ENCODE measurements at regions of chr16 and their contacts with region 1.

Region 1: DNA sequence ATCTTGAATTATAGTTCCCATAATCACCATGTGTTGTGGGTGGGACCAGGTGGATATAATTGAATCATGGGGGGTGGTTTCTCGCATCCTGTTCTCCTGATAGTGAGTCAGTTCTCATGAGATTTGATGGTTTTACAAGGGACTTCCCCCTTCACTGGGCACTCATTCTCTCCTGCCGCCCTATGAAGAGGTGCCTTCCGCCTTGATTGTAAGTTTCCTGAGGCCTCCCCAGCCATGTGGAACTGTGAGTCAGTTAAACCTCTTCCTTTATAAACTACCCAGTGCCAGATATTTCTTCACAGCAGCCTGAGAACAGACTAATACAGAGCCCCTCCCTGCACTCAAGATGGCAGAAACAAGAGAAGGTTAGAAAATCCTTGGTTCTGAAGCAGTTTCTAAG is 26.4 kb downstream of the LDAF1 start:
- DNase-seq: peak; percentile 53
- H3K4me3 Mint-ChIP-seq: no peak overlapping the region
- H3K27ac Mint-ChIP-seq: no peak overlapping the region
- H3K4me1 Mint-ChIP-seq: peaks cover 16% of the 10 kb centered on the region
- H3K27me3 Mint-ChIP-seq: no peaks in the 10 kb centered on the region

Region 2: GRCh38 chr16:21158208-21159110 is 26.4 kb before region 1 on chr16 and contains the start of gene LDAF1:
- CTCF ChIA-PET with region 1: interaction called, 3 read pairs
- intact Hi-C with region 1: loop called (anchors 2 kb)
- DNase-seq: peak; percentile 86
- H3K4me3 Mint-ChIP-seq: peak within 1 kb of the TSS; percentile 88
- H3K27ac Mint-ChIP-seq: no peak within 1 kb of the TSS
- H3K4me1 Mint-ChIP-seq: peaks cover 26% of the 10 kb centered on the region
- H3K27me3 Mint-ChIP-seq: no peaks in the 10 kb centered on the region
- total RNA-seq, gene LDAF1: 13.3 to 14.5 TPM

Region 3: GRCh38 chr16:21277927-21278706 is 93.3 kb after region 1 on chr16 and contains the start of gene CRYM:
- CTCF ChIA-PET with region 1: interaction called, 5 read pairs
- intact Hi-C with region 1: loop called (anchors 1 kb)
- DNase-seq: peak; percentile 69
- H3K4me3 Mint-ChIP-seq: peak within 1 kb of the TSS; percentile 38
- H3K27ac Mint-ChIP-seq: no peak within 1 kb of the TSS
- H3K4me1 Mint-ChIP-seq: peaks cover 3% of the 10 kb centered on the region
- H3K27me3 Mint-ChIP-seq: peaks cover 62% of the 10 kb centered on the region
- total RNA-seq, gene CRYM: not detected

Region 4: DNA sequence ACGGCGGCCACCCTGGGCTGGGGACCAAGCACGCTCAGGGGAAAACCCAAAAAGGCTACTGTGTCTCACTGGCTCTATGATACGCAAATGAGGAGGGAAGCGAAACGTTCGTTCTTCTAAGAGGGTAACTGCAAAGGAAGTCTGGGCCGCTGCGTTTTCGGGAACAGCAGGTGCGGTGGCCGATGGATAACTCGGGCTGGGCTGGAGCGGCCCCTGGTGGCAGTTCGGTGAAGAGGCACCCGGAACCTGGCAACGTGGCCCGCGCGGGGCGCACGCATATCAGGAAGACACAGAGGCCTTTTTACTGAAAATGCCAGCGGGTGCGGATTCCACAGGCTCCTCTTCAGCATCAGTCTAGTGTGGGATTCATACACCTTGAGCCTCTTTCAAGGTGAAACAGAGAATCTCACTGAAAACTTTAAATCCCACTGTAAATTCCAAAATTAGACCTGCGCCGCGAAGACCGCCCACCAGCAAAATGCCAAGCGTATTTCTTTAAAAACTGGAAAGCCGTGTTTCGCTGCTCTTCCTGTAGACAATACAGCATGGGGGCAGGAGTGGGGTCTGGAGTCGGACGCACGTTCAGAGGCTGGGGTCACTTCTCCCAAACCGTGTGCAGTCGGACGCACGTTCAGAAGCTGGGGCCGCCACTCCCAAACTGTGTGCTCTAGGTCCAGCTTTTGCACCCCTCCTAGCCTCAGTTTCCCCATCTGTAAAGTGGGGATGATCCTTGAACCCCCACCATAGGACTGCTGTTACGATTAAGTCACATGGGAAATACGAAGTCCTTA is 370.2 kb after region 1 on chr16:
- CTCF ChIA-PET with region 1: no interaction called
- intact Hi-C with region 1: loop called (anchors 5 kb)
- DNase-seq: peak; percentile 96
- H3K4me3 Mint-ChIP-seq: peak overlapping the region; percentile 33
- H3K27ac Mint-ChIP-seq: no peak overlapping the region
- H3K4me1 Mint-ChIP-seq: peaks cover 9% of the 10 kb centered on the region
- H3K27me3 Mint-ChIP-seq: peaks cover 10% of the 10 kb centered on the region

Region 5: DNA sequence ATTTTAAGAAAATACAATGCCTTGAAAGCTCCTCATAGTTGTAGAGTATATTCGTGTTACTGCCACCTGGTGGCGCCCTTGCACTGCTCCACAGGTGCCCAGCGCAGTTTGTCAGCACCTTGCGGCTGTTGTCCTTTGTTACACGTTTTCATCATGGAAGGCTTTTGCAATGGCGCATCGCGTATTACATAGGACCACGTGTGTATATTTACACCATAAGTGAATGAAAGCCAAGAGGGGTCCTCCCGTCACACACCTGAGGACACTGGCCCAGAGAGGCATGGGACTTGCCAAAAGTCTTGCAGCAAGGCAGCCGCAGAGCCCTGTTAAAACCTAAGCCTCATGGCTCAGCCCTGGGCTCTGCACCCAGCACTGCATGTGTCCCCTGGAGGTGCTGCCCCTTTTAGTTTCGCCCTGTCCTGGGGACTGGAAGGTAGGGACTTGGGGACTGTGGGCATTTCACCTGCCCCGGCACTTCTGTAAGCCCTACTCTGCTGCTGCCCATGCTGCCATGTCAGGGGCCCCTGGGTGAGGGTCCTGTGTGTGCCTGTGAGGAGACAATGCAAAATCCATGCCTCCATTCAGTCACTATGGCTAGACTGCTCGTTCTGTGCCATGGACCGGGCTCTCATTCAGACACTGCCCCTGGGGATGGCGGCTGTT is 1136.6 kb after region 1 on chr16:
- CTCF ChIA-PET with region 1: interaction called, 6 read pairs
- intact Hi-C with region 1: loop called (anchors 1 kb)
- DNase-seq: peak; percentile 83
- H3K4me3 Mint-ChIP-seq: no peak overlapping the region
- H3K27ac Mint-ChIP-seq: peak overlapping the region; percentile 75
- H3K4me1 Mint-ChIP-seq: no peaks in the 10 kb centered on the region
- H3K27me3 Mint-ChIP-seq: no peaks in the 10 kb centered on the region

Measured in activated naive CD4-positive, alpha-beta T cell treated with anti-CD3 and anti-CD28 coated beads for 36 hours (primary cell).